Naive thymus-derived CD4-positive, alpha-beta T cell (primary cell): ENCODE measurements at regions of chr13 and their contacts with region 1.

Region 1: DNA sequence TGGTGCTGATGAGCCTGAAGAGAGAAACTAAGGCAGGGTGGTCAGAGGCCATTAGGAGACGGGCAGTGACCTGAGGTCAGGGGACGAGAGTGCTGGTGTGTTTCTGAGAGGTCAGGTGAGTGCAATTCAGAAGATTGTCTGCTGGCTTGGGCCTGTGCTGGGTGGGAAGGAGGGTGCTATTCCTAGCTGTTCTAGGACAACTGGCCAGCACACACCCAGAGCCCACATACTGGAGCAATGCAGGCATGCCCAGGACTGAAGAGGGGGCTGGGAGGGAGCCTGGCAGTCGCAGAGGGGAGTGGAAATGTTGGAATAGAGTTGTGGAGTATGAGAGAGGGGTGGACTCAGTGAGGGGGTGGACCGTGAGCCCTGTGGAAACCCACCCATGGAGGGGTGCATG is 16.5 kb downstream of the ARHGEF7 start:
- DNase-seq: no peak
- ATAC-seq: no peak
- H3K4me3 ChIP-seq: no peak overlapping the region
- H3K4me3 Mint-ChIP-seq: no peak overlapping the region
- H3K27ac ChIP-seq: no peak overlapping the region
- H3K27ac Mint-ChIP-seq: no peak overlapping the region
- H3K4me1 ChIP-seq: no peaks in the 10 kb centered on the region
- H3K4me1 Mint-ChIP-seq: no peaks in the 10 kb centered on the region
- H3K27me3 ChIP-seq: no peaks in the 10 kb centered on the region
- H3K27me3 Mint-ChIP-seq: peaks cover 3 to 46% (median 12%) of the 10 kb centered on the region in 5 donors

Region 2: GRCh38 chr13:111114362-111115060 is 17.1 kb before region 1 on chr13:
- CTCF ChIA-PET with region 1: no interaction called
- POLR2A ChIA-PET with region 1: no interaction called
- intact Hi-C with region 1: loop called in 1 of 2 experiments (anchors 1 kb)
- DNase-seq: peak in 7 of 9 donors; percentile 10 to 38 (median 30)
- ATAC-seq: peak; percentile 55
- H3K4me3 ChIP-seq: peak overlapping the region; percentile 65
- H3K4me3 Mint-ChIP-seq: peak overlapping the region; percentile 85 to 93 (median 90)
- H3K27ac ChIP-seq: no peak overlapping the region
- H3K27ac Mint-ChIP-seq: peak overlapping the region in 5 of 9 donors; percentile 29 to 65 (median 51)
- H3K4me1 ChIP-seq: peaks cover 0 to 5% of the 10 kb centered on the region in 2 donors
- H3K4me1 Mint-ChIP-seq: peaks cover 4 to 19% (median 17%) of the 10 kb centered on the region in 7 donors
- H3K27me3 ChIP-seq: peaks cover 9 to 19% of the 10 kb centered on the region in 2 donors
- H3K27me3 Mint-ChIP-seq: peaks cover 74 to 87% (median 78%) of the 10 kb centered on the region in 5 donors

Region 3: GRCh38 chr13:111296417-111296816 is 164.8 kb after region 1 on chr13:
- CTCF ChIA-PET with region 1: no interaction called
- POLR2A ChIA-PET with region 1: no interaction called
- intact Hi-C with region 1: no loop called
- DNase-seq: no peak
- ATAC-seq: no peak
- H3K4me3 ChIP-seq: no peak overlapping the region
- H3K4me3 Mint-ChIP-seq: no peak overlapping the region
- H3K27ac ChIP-seq: no peak overlapping the region
- H3K27ac Mint-ChIP-seq: no peak overlapping the region
- H3K4me1 ChIP-seq: peaks cover 7 to 14% of the 10 kb centered on the region in 2 donors
- H3K4me1 Mint-ChIP-seq: peaks cover 0 to 15% (median 10%) of the 10 kb centered on the region in 7 donors
- H3K27me3 ChIP-seq: no peaks in the 10 kb centered on the region
- H3K27me3 Mint-ChIP-seq: no peaks in the 10 kb centered on the region